Activated CD4-positive, alpha-beta T cell treated with anti-CD3 and anti-CD28 coated beads, Interleukin-2, amount 10 ng/mL, durations not matched to agents 7 days and 5 days (primary cell): ENCODE measurements at regions of chr20 and their contacts with region 1.

Region 1: DNA sequence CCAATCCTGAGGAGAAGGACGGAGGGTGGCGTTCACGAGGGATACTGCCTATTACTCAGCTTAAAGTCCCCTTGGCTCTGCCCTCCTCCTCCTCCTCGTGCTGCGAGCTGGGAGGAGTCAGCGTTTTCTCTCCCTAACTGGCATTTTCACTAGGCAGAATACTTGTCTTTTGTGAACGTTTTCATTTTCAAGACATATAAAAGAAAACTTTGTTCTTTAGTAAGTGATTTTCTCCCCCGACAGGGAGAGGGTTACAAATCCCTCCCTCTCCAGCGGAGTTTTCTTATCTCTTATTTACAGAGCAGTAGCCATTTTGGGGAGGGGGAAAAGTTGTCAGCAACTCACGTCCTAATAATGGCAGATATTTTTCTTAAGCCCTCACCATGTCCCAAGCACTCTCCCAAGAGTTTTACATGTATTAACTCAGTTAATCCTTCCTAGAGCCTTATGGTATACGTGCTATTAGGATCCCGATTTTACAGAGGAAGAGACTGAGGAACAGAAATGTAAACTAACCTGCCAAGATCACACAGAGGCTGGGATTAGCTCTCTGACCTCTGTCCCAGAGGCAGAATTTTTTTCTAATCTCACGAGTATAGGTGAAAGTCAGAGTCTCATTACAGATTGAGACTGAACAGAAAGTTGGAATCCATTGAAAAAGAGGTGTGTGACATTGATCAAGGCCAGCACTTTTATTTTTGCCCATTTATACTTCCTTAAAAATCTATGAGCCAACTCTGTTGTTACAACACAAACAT is 30.0 kb upstream of the ZNF217 start:
- DNase-seq: peak; percentile 43
- H3K4me3 Mint-ChIP-seq: peak overlapping the region; percentile 66
- H3K27ac Mint-ChIP-seq: peak overlapping the region; percentile 98
- H3K4me1 Mint-ChIP-seq: peaks cover 49% of the 10 kb centered on the region
- H3K27me3 Mint-ChIP-seq: no peaks in the 10 kb centered on the region

Region 2: DNA sequence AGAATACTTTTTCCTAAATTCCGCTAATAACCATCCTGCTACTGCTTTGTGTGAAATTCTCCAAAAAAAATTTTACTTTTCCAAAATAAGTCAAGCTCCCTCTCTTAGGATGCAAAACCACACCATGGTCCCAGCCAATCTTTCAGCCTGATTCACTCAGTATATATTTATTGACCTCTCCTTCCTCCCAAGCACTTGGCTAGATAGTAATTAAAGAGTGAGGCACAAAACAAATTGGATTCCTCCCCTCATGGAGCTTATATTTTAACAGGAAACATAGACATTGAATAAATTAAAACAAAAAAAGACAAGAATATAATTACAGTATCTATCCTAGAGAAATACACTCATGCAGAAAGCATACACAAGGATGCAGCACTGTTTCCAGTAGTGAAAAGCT is 21.0 kb before region 1 on chr20:
- CTCF ChIA-PET with region 1: no interaction called
- POLR2A ChIA-PET with region 1: no interaction called
- DNase-seq: no peak
- H3K4me3 Mint-ChIP-seq: no peak overlapping the region
- H3K27ac Mint-ChIP-seq: no peak overlapping the region
- H3K4me1 Mint-ChIP-seq: peaks cover 53% of the 10 kb centered on the region
- H3K27me3 Mint-ChIP-seq: no peaks in the 10 kb centered on the region

Region 3: GRCh38 chr20:53635221-53635924 is 11.7 kb after region 1 on chr20:
- CTCF ChIA-PET with region 1: interaction called, 15 read pairs
- POLR2A ChIA-PET with region 1: no interaction called
- DNase-seq: no peak
- H3K4me3 Mint-ChIP-seq: no peak overlapping the region
- H3K27ac Mint-ChIP-seq: no peak overlapping the region
- H3K4me1 Mint-ChIP-seq: peaks cover 35% of the 10 kb centered on the region
- H3K27me3 Mint-ChIP-seq: no peaks in the 10 kb centered on the region